ENCODE measurements at regions of chr2 and their contacts with region 1.

Region 1: GRCh38 chr2:7427293-7428060 is 510.3 kb downstream of the RNF144A start:
- DNase-seq: peak; percentile 37
- H3K4me3 ChIP-seq: no peak overlapping the region
- H3K27ac ChIP-seq: no peak overlapping the region
- H3K4me1 ChIP-seq: peaks cover 8% of the 10 kb centered on the region
- H3K27me3 ChIP-seq: peaks cover 2% of the 10 kb centered on the region
- CTCF ChIP-seq: peak; percentile 61 to 66

Region 2: GRCh38 chr2:7071916-7072556 is 355.4 kb before region 1 on chr2:
- CTCF ChIA-PET with region 1: no interaction called
- dilution Hi-C with region 1: no loop called
- in situ Hi-C with region 1: no loop called
- intact Hi-C with region 1: no loop called
- DNase-seq: no peak
- H3K4me3 ChIP-seq: no peak overlapping the region
- H3K27ac ChIP-seq: no peak overlapping the region
- H3K4me1 ChIP-seq: no peaks in the 10 kb centered on the region
- H3K27me3 ChIP-seq: no peaks in the 10 kb centered on the region
- CTCF ChIP-seq: no peak

Region 3: DNA sequence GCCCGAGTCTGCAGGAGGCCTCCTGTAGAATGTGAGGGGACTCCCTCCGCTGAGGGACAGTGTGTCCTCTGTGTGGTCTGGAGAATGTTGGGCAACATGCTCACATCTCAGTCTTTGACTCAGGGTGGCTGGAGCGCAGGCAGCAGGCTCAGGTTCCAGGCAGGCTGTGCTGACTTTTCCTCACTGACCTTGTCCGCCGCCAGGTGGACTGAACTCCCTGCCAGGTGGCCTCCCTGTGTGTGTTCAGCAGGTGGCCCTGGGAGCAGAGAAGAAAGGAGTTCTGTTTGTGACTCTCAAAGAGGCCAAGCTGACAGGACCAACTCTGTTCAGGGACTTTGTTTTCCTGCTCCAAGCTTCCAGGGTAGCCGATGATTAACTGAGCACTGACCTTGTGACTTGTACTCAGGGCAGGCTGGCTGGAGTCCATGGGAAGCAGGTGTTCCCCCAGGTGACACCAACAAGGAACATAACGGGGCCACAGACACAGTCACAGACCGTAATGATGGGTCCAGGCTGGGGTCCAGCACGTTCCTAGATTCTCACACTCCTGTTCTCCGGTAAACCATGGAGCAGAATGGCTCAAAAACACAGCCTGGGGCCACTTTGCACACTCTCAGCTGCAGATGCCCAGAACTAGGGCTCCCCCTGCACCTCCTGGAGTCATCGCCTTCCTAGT is 70.4 kb before region 1 on chr2:
- CTCF ChIA-PET with region 1: no interaction called
- dilution Hi-C with region 1: no loop called
- in situ Hi-C with region 1: no loop called
- intact Hi-C with region 1: no loop called
- DNase-seq: no peak
- H3K4me3 ChIP-seq: no peak overlapping the region
- H3K27ac ChIP-seq: no peak overlapping the region
- H3K4me1 ChIP-seq: no peaks in the 10 kb centered on the region
- H3K27me3 ChIP-seq: no peaks in the 10 kb centered on the region
- CTCF ChIP-seq: no peak

Region 4: DNA sequence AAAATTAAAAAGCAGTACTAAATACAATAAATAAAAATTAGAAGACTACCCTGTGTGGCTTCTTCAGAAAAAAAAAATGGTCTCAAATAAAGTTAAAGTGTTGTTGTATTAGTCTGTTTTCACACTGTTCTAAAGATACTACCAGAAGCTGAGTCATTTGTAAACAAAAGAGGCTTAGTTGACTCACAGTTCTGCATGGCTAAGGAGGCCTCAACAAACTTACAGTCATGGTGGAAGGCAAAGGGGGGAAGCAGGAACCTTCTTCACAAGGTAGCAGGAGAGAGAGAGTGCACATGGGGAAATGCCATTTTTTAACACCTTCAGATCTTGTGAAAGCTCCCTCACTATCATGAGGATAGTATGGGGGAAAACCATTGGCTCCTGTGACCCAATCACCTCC is 102.5 kb after region 1 on chr2:
- CTCF ChIA-PET with region 1: no interaction called
- dilution Hi-C with region 1: no loop called
- in situ Hi-C with region 1: no loop called
- intact Hi-C with region 1: no loop called
- DNase-seq: peak; percentile 19
- H3K4me3 ChIP-seq: no peak overlapping the region
- H3K27ac ChIP-seq: no peak overlapping the region
- H3K4me1 ChIP-seq: no peaks in the 10 kb centered on the region
- H3K27me3 ChIP-seq: no peaks in the 10 kb centered on the region
- CTCF ChIP-seq: no peak

Region 5: DNA sequence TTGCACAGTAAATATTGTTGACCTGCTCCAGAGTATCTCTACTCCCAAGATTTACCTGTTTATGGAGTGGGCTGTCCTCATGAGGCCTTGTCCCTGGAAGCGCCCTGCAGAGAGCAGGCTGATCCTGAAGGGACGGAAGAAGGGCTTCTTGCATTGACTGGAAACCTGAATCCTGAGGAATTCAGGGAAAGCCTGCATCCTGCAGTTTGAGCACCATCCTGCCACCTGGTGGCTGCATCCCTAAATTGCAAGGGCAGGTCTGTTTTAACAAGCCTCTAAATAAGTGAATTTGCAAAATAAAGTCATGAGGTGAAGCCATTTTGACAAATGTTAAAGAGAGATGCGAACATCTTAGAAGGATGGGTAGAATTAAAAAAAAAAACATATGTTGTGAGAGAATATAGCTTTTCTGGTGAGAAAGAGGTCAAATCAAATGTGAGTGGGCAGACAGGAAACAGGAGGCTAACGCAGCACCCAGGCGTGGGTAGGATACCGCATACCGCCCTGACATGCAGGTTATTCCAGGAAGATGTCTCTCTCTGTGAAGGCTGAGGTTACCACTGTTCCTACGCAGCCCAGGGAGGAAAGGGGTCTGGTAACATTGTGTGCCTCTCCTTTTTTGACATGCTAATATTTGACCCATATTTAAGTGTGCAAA is 244.7 kb after region 1 on chr2:
- CTCF ChIA-PET with region 1: no interaction called
- dilution Hi-C with region 1: no loop called
- in situ Hi-C with region 1: no loop called
- intact Hi-C with region 1: loop called (anchors 5 kb)
- DNase-seq: peak; percentile 24
- H3K4me3 ChIP-seq: no peak overlapping the region
- H3K27ac ChIP-seq: no peak overlapping the region
- H3K4me1 ChIP-seq: no peaks in the 10 kb centered on the region
- H3K27me3 ChIP-seq: no peaks in the 10 kb centered on the region
- CTCF ChIP-seq: peak; percentile 65 to 76

Measured in mammary epithelial cell (primary cell).